ENCODE measurements at regions of chr13 and their contacts with region 1.

Region 1: DNA sequence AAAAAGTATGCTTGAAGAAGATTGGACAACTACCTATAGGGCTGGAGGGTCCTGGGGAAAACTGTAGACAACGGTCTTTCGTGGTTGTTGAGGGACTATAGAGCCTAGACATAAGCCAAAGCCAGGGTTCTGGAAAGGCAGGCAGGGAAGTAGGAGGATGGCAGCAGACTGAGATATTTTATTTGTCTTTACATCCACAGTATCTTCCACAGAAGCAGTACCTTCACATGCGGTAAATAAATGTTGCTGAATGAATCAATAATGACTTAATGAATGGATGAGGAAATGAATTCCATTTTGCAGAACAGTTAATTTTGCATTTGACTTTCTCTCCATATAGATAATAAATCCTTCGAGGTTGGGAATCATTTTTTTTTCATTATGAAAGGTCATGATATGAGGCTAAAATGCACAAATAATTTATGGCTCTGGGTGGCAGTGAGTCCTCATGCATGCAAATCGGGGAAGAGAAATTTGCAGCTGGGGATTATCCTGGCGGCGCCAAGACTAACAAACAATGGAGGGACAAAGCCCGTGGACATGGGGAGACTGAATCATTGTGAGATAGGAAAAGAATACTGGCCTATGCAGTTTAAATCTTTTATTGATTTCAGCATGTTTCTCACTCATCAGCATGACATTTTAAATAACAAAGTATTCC is 102.0 kb downstream of the ERCC5 start:
- DNase-seq: no peak
- H3K4me3 ChIP-seq: no peak overlapping the region
- H3K27ac ChIP-seq: no peak overlapping the region
- H3K4me1 ChIP-seq: no peaks in the 10 kb centered on the region
- H3K27me3 ChIP-seq: no peaks in the 10 kb centered on the region
- CTCF ChIP-seq: no peak

Region 2: DNA sequence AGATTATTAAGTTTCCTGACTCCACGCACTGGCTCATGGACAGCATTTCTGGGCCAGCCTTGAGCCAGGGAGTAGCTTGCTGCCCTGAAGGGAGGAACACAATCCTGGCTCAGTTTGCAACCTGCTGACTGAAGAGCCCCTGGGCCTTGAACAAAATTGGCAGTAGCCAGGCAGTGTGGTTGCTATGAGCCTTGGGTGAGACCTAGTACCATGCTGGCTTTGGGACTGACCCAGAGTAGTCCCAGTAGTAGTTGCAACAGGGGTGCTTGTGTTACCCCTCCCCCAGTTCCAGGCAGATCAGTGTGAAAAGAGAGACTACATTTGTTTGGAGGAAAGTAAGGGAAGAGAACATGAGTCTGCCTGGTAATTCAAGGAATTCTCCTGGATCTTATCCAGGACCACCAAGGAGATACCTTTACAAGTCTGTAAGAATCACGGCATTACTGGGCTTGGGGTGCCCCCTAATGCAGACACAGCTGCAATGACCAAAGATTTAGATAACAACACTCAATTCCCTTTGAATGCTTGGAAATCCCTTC is 1473.4 kb before region 1 on chr13:
- CTCF ChIA-PET with region 1: no interaction called
- POLR2A ChIA-PET with region 1: no interaction called
- intact Hi-C with region 1: no loop called
- DNase-seq: no peak
- H3K4me3 ChIP-seq: no peak overlapping the region
- H3K27ac ChIP-seq: no peak overlapping the region
- H3K4me1 ChIP-seq: no peaks in the 10 kb centered on the region
- H3K27me3 ChIP-seq: no peaks in the 10 kb centered on the region
- CTCF ChIP-seq: 0 out of 2 replicates have a peak, but pooled peaks have one; percentile 17

Region 3: DNA sequence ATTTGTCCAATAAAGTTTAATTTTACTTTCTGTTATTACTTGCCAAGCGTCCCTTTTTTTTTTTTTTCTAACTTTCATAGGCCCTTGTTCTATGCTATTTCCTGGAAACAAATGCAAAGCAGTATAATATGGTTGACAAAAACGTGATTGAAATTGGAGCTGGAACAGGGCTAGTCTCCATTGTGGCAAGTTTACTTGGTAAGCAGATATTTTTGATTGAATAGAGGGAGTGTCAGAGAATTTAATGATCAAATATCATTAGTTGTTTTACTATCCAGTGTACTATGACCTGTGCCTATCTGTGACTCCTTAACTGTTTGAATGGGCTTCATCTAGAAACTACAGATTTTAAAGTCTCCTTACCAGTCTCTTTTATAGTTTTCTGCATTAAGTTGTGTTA is 55.4 kb before region 1 on chr13:
- CTCF ChIA-PET with region 1: interaction called, 11 read pairs
- POLR2A ChIA-PET with region 1: no interaction called
- intact Hi-C with region 1: no loop called
- DNase-seq: no peak
- H3K4me3 ChIP-seq: no peak overlapping the region
- H3K27ac ChIP-seq: no peak overlapping the region
- H3K4me1 ChIP-seq: no peaks in the 10 kb centered on the region
- H3K27me3 ChIP-seq: no peaks in the 10 kb centered on the region
- CTCF ChIP-seq: no peak

Measured in PC-9 (cell line).